ENCODE measurements at regions of chr3 and their contacts with region 1.

Region 1: GRCh38 chr3:38117748-38118420 is 19.0 kb downstream of the ACAA1 start:
- DNase-seq: peak; percentile 61 to 84
- ATAC-seq: peak; percentile 83 to 95 (median 85)
- H3K4me3 ChIP-seq: no peak overlapping the region
- H3K4me3 Mint-ChIP-seq: no peak overlapping the region
- H3K27ac ChIP-seq: no peak overlapping the region
- H3K27ac Mint-ChIP-seq: no peak overlapping the region
- H3K4me1 ChIP-seq: peaks cover 3% of the 10 kb centered on the region
- H3K4me1 Mint-ChIP-seq: peaks cover 0 to 33% of the 10 kb centered on the region in 2 donors
- H3K27me3 ChIP-seq: no peaks in the 10 kb centered on the region
- H3K27me3 Mint-ChIP-seq: no peaks in the 10 kb centered on the region
- CTCF ChIP-seq: peak; percentile 52

Region 2: DNA sequence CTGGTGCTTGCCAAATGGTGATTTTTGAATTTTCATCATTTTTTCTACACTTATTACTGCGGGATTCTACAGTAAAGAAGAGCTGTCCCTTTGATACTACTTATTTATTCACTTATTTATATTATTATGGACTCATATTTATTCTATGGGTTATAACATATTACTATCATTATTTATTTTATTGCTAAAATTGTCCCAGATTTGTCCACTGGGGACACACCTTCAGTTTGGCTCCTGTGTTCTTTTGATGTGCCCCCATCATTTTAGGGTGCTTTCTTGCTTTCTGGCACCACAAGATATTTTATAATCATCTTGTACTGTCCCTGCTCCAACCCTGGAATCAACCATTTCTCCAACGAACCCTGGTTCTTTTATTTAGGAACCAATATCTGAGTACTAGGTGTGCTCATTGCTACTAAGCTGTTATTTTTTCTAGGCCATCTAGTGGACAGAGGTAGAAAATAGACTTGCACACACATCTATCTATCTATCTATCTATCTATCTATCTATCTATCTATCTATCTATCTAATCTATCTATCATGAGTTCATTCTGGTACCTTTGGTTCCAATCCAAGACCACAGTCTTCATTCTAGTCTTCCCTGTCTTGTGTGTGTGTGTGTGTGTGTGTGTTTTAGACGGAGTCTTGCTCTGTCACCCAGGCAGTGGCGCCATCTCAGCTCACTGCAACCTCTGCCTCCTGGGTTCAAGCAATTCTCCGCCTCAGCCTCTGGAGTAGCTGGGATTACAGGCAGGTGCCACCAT is 180.2 kb after region 1 on chr3:
- intact Hi-C with region 1: loop called (anchors 5 kb)
- DNase-seq: peak in 1 of 2 donors; percentile 17
- ATAC-seq: no peak
- H3K4me3 ChIP-seq: no peak overlapping the region
- H3K4me3 Mint-ChIP-seq: no peak overlapping the region
- H3K27ac ChIP-seq: no peak overlapping the region
- H3K27ac Mint-ChIP-seq: no peak overlapping the region
- H3K4me1 ChIP-seq: no peaks in the 10 kb centered on the region
- H3K4me1 Mint-ChIP-seq: no peaks in the 10 kb centered on the region
- H3K27me3 ChIP-seq: no peaks in the 10 kb centered on the region
- H3K27me3 Mint-ChIP-seq: peaks cover 3 to 10% of the 10 kb centered on the region in 2 donors
- CTCF ChIP-seq: peak; percentile 19

Region 3: DNA sequence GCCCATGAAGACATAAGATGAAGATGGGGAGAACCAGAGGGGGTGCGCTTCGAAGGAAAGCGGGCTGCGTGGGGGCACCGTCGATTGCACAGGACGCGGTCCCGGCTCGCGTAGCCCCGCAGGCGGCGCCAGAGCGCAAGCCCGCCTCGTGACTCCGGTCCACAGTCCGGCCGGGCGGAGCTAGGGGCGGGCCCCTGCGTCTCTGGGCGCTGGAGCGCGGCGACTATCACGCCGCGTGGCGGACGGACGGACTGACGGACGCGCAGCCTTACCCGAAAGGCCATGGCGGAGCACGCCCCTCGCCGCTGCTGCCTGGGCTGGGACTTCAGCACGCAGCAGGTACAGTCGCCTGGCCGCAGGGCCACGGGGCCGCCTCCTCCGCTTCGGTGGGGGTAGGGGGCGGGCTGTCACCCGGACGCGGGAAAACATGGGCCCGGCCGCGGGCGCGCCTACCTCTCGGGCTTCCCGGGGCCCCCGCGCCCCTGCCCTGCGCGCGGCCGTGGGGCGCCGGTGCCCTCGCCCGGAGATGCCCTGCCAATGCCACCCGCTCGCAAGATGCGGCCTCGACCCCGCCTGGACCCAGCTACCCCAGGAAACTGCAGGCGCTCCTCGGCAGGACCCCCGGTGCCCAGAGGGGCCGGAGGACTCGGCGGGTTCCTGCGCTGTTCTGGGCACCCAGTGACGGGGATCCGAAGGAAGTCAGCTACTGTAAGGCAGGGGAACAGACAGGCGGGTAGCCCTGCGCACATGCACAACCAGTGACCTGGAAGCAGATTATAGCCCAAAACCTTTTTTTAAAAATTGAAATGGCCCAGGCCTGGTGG is 228.9 kb after region 1 on chr3 and contains the start of gene XYLB:
- intact Hi-C with region 1: loop called (anchors 5 kb)
- DNase-seq: peak; percentile 78 to 83
- ATAC-seq: peak; percentile 98 to 99 (median 99)
- H3K4me3 ChIP-seq: peak within 1 kb of the TSS; percentile 52
- H3K4me3 Mint-ChIP-seq: peak within 1 kb of the TSS; percentile 85
- H3K27ac ChIP-seq: no peak within 1 kb of the TSS
- H3K27ac Mint-ChIP-seq: peak within 1 kb of the TSS; percentile 18 to 80
- H3K4me1 ChIP-seq: peaks cover 13% of the 10 kb centered on the region
- H3K4me1 Mint-ChIP-seq: peaks cover 0 to 10% of the 10 kb centered on the region in 2 donors
- H3K27me3 ChIP-seq: no peaks in the 10 kb centered on the region
- H3K27me3 Mint-ChIP-seq: peaks cover 0 to 5% of the 10 kb centered on the region in 2 donors
- CTCF ChIP-seq: peak; percentile 83
- total RNA-seq, gene XYLB: 1.6 to 3.7 (median 2.4) TPM